ENCODE measurements at regions of chr11 and their contacts with region 1.

Region 1: DNA sequence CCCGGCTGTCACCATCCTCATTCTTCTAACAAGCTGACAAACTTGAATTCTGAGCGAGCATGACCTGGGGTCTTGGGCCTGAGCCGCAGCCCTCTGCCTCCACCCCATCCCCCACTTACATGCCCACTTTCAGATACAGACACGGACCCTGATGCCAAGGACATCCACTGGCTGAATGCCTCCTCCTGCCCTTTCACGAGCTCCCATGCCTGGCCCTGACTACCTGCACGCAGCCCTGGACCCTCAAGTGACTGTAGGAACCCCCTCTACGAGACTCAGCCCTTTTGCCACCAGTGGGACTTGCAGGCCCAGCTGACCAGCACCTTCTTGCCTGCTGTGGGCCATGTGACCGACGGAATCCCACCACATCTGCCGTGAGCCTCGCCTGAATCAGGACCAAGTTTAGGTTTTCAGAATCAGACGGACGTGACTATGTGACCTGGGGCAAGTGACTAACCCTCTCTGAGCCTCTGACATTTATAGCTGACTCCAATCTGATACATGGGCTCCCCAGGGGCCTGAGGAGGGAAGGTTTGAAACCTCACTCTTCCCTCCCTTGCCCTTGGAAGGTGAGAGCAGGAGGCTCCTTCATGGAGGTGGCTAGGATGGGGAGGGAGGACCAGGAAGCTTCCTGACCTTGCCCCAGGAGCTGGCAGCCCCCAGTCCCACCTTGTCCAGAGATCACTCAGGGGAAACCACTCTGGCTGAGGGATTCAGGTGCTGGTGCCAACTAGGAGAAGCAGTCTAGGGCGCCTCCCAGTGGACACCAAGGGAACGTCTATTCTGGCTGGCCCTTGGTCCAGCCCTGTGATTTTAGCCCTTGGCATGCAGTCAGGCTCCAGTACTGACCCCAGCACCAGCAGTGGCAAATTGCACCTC is 46.9 kb upstream of the SYT7 start:
- DNase-seq: no peak
- H3K4me3 ChIP-seq: no peak overlapping the region
- H3K27me3 ChIP-seq: peaks cover 3% of the 10 kb centered on the region
- CTCF ChIP-seq: peak; percentile 92

Region 2: DNA sequence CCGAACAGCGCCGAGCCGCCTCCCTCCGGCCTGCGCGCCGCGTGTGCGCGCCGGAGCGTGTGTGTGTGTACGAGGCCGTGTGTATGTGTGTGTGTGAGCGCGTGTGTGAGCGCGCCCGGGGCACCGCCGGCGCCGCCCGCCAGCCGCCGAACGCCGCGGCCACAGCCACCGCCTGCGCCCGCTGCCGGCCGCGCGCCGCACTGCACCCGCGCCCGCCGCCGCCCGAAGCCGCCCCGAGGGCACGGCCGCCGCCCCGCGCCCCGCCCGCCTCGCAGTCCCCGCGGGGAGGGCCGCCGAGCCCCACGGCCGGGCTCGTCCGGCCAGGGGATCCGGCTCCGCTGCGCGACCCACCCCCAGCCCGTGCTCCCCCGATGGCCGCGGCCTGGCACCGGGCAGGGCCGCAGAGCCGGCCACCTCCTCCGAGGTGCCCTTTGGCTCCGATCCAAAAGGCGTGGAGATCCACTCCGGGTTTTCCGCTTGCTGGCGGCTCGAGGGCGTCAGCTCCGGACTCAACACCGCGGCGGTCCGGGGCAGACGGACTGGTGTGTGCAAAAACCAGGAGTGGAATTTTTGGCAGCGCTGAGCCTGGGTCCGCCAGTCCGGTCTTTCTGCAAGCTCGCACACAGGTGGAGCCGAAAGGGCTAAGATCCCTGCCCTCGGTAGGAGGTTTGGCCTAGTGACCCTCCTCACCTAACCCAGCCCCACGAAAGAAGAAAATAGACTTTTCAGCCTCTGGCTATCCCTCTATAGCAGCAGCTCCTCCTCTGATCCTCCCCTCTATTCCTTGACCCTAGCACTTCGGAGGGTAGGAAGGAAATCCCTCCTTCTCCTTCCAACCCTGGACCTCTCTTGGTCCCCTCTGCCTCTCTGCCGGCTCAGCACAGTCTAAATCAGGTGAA is 46.5 kb before region 1 on chr11 and contains the start of gene SYT7:
- CTCF ChIA-PET with region 1: interaction called, 12 read pairs
- POLR2A ChIA-PET with region 1: no interaction called
- DNase-seq: peak; percentile 47
- H3K4me3 ChIP-seq: peak within 1 kb of the TSS; percentile 41
- H3K27me3 ChIP-seq: peaks cover 39% of the 10 kb centered on the region
- CTCF ChIP-seq: no peak; the same call in 1 of the 2 replicates
- polyA plus RNA-seq, gene SYT7: 0.01 and 0.04 TPM in 2 replicates

Region 3: GRCh38 chr11:61587521-61588453 is 40.0 kb before region 1 on chr11:
- CTCF ChIA-PET with region 1: interaction called, 11 read pairs
- POLR2A ChIA-PET with region 1: no interaction called
- DNase-seq: no peak
- H3K4me3 ChIP-seq: peak overlapping the region; percentile 39
- H3K27me3 ChIP-seq: peaks cover 27% of the 10 kb centered on the region
- CTCF ChIP-seq: peak; percentile 30

Region 4: GRCh38 chr11:61695917-61696316 is 68.1 kb after region 1 on chr11:
- CTCF ChIA-PET with region 1: no interaction called
- POLR2A ChIA-PET with region 1: no interaction called
- DNase-seq: peak; percentile 29
- H3K4me3 ChIP-seq: no peak overlapping the region
- H3K27me3 ChIP-seq: no peaks in the 10 kb centered on the region; the same call in 1 of the 2 replicates
- CTCF ChIP-seq: peak; percentile 28

Measured in BJ (cell line).